Adrenal gland (tissue), 19 donors: ENCODE measurements at regions of chr1 and their contacts with region 1.

Region 1: GRCh38 chr1:23098463-23099170 is 70.0 kb downstream of the LUZP1 start:
- DNase-seq: peak; percentile 62 to 89 (median 68)
- H3K4me3 ChIP-seq: peak overlapping the region in 1 of 4 donors; percentile 15
- H3K27ac ChIP-seq: peak overlapping the region in 3 of 5 donors; percentile 13 to 85 (median 80)
- H3K4me1 ChIP-seq: peaks cover 39 to 57% of the 10 kb centered on the region in 2 donors
- H3K27me3 ChIP-seq: no peaks in the 10 kb centered on the region
- CTCF ChIP-seq: peak; percentile 70 to 99 (median 94)
- POLR2A ChIP-seq: no peak

Region 2: DNA sequence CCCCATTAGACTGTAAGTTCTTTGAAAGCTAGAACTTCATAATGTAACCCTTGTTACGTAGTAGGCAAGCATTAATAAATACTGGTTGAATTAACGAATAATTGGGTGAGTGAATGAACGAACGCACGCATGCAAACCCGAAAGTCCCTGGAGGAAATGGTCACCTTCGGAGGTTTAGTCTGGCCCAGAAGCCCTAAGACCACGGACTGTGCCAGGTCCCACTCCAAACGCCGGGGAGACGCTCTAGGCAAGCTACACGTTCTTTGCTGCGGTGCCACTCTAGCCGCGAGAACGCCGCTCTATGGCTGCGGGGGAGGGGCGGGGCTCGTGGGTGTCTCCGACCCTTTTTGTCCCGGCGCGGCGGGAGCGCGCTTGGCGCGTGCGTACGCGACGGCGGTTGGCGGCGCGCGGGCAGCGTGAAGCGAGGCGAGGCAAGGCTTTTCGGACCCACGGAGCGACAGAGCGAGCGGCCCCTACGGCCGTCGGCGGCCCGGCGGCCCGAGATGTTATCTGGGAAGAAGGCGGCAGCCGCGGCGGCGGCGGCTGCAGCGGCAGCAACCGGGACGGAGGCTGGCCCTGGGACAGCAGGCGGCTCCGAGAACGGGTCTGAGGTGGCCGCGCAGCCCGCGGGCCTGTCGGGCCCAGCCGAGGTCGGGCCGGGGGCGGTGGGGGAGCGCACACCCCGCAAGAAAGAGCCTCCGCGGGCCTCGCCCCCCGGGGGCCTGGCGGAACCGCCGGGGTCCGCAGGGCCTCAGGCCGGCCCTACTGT is 79.3 kb before region 1 on chr1 and contains the start of gene KDM1A:
- intact Hi-C with region 1: loop called in 1 of 2 experiments (anchors 10 kb)
- DNase-seq: peak; percentile 97 to 99 (median 98)
- H3K4me3 ChIP-seq: peak within 1 kb of the TSS; percentile 79 to 99 (median 83)
- H3K27ac ChIP-seq: peak within 1 kb of the TSS; percentile 60 to 91 (median 90)
- H3K4me1 ChIP-seq: peaks cover 8 to 15% of the 10 kb centered on the region in 2 donors
- H3K27me3 ChIP-seq: no peaks in the 10 kb centered on the region
- CTCF ChIP-seq: no peak
- POLR2A ChIP-seq: peak; percentile 78 to 93
- total RNA-seq, gene KDM1A: 43.0 to 87.1 (median 61.9) TPM

Region 3: DNA sequence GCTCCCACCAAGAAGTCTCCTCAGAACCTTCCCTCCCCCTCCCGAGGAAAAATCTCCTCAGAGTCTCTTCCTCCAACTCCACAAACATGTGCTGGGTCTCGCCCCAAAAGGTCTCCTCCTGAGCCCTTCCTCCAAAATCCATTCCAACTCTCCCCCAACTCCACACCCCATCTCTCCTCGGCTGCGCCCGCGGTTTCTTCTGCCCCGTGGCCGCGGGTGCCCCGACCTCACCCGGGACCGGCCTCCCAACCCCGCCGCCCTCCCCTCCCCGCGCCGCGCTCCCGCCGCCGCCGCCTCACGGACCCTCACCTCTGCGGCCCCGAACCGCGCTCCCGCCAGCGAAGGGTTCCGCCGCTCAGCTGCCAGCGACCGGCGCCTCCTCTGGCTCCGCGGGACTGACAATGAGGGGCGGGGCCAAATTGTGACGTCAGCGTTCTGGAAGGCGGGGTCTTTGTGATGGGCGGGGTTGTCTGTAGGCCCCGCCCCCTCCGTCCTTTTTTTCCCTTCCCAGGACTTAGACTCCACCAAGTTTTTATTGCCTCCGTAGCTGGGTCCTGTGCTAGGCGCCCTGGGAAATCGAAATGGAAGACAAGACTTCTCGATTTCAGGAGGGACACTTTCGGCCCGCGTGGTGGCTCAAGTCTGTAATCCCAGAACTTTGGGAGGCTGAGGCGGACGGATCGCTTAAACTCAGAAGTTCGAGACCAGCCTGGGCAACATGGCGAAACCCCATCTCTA is 70.0 kb after region 1 on chr1 and contains the start of gene LUZP1:
- intact Hi-C with region 1: loop called in 1 of 2 experiments (anchors 5 kb)
- DNase-seq: peak; percentile 89 to 98 (median 94)
- H3K4me3 ChIP-seq: peak within 1 kb of the TSS; percentile 69 to 95 (median 88)
- H3K27ac ChIP-seq: peak within 1 kb of the TSS; percentile 92 to 98 (median 93)
- H3K4me1 ChIP-seq: peaks cover 23 to 52% of the 10 kb centered on the region in 2 donors
- H3K27me3 ChIP-seq: no peaks in the 10 kb centered on the region
- CTCF ChIP-seq: no peak
- POLR2A ChIP-seq: peak; percentile 93 to 98
- total RNA-seq, gene LUZP1: 16.2 to 65.3 (median 29.5) TPM

Region 4: GRCh38 chr1:23184212-23184934 is 85.8 kb after region 1 on chr1:
- intact Hi-C with region 1: loop called (anchors 2 to 5 kb)
- DNase-seq: peak in 3 of 7 donors; percentile 25 to 41 (median 33)
- H3K4me3 ChIP-seq: peak overlapping the region in 2 of 4 donors; percentile 27 to 70
- H3K27ac ChIP-seq: no peak overlapping the region
- H3K4me1 ChIP-seq: peaks cover 0 to 5% of the 10 kb centered on the region in 2 donors
- H3K27me3 ChIP-seq: no peaks in the 10 kb centered on the region
- CTCF ChIP-seq: peak; percentile 86 to 98 (median 92)
- POLR2A ChIP-seq: no peak

Region 5: DNA sequence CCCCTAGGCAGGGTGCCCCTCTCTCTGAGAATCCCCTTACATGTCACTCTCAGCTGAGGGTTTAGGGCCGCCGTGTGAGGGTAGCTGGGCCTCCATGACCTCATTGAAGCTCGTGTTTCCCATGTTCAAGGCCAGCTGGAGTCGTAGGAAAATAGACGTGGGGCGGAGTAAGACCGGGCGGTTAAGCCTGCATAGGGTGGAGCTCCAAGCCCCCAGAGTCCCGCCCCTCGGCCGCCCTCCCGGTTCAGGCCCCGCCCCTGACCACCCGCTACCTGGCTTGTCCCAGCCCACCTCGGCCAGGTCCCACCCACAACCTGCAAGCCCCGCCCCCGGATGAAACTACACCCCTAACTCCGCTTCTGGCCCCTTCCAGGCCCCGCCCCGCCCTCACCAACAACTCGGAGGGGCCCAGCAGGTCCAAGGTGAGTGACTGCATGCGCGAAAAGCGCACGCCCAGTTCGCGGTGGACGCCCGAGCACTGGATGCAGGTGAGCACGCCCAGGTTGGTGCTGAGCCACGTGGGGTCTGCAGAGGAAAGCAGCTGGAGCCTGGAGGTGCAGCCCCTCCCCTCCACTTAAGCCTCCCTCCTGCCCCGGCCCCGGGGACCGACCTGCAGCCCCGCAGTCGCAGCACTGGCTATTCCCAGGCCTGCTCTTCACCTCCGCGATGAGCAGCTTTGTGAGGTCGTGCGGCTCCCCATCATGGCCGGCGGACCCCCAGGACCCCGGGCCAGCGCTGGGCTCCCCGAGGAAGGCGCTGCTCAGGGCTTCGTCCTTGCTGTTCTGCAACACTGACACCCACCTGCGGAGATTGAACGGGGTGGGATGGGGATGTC is 338.1 kb after region 1 on chr1:
- intact Hi-C with region 1: no loop called
- DNase-seq: peak; percentile 50 to 72 (median 67)
- H3K4me3 ChIP-seq: no peak overlapping the region
- H3K27ac ChIP-seq: peak overlapping the region in 1 of 5 donors; percentile 62
- H3K4me1 ChIP-seq: no peaks in the 10 kb centered on the region
- H3K27me3 ChIP-seq: no peaks in the 10 kb centered on the region
- CTCF ChIP-seq: no peak
- POLR2A ChIP-seq: no peak